H1 (cell line): ENCODE measurements at regions of chr4 and their contacts with region 1.

Region 1: GRCh38 chr4:111631215-111631999 is 513.8 kb upstream of the FAM241A start:
- DNase-seq: no peak
- H3K4me3 ChIP-seq: no peak overlapping the region
- H3K27ac ChIP-seq: no peak overlapping the region
- H3K4me1 ChIP-seq: no peaks in the 10 kb centered on the region
- H3K27me3 ChIP-seq: no peaks in the 10 kb centered on the region
- CTCF ChIP-seq: peak in 2 of 3 experiments; percentile 20 to 50; a peak in 2 of 4 replicates
- EP300 ChIP-seq: no peak
- POLR2A ChIP-seq: no peak
- RAD21 ChIP-seq: peak; percentile 38 to 41

Region 2: DNA sequence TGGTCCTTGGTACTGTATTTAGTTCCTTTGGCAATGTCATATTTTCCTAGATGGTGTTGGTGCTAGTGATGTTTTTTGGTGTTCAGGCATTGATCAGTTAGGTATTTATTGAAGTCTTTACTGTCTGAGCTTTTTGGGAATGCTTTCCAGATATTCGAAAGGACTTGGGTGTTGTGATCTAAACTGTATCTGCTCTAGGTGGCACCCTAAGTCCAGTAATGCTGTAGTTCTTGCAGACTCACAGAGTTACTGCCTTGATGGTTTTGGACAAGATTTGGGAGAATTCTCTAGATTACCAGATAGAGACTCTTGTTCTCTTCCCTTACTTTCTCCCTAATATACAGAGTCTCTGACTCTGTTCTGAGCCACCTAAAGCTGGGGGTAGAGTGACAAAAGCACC is 495.0 kb before region 1 on chr4:
- CTCF ChIA-PET with region 1: interaction called, 19 read pairs
- POLR2A ChIA-PET with region 1: no interaction called
- DNase-seq: no peak
- H3K4me3 ChIP-seq: no peak overlapping the region
- H3K27ac ChIP-seq: no peak overlapping the region
- H3K4me1 ChIP-seq: no peaks in the 10 kb centered on the region
- H3K27me3 ChIP-seq: no peaks in the 10 kb centered on the region
- CTCF ChIP-seq: peak in 2 of 3 experiments; percentile 33 to 39; a peak in 2 of 4 replicates
- EP300 ChIP-seq: no peak
- POLR2A ChIP-seq: no peak
- RAD21 ChIP-seq: peak; percentile 71 to 77

Region 3: DNA sequence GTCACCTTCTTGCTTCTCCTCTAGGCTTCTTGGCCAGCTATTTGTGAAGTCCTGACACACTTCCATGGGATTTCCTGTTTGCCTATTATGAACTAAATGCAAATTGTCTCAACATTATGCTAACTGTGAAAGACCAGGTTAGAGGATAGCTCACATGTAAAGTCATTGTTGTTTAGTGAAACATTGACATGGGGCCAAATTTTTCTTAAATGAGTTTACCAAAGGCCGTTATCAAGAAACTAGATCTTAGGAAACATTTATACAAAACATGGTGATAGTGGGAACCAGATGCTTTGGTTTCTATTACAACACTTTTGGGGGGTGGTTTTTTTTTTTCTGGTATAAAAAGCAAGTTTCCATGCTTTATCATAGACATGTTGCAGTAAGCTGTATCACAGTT is 47.1 kb after region 1 on chr4:
- CTCF ChIA-PET with region 1: no interaction called
- POLR2A ChIA-PET with region 1: no interaction called
- DNase-seq: no peak
- H3K4me3 ChIP-seq: no peak overlapping the region
- H3K27ac ChIP-seq: no peak overlapping the region
- H3K4me1 ChIP-seq: no peaks in the 10 kb centered on the region
- H3K27me3 ChIP-seq: no peaks in the 10 kb centered on the region
- CTCF ChIP-seq: no peak
- EP300 ChIP-seq: no peak
- POLR2A ChIP-seq: no peak
- RAD21 ChIP-seq: no peak